ENCODE measurements at regions of chr1 and their contacts with region 1.

Region 1: DNA sequence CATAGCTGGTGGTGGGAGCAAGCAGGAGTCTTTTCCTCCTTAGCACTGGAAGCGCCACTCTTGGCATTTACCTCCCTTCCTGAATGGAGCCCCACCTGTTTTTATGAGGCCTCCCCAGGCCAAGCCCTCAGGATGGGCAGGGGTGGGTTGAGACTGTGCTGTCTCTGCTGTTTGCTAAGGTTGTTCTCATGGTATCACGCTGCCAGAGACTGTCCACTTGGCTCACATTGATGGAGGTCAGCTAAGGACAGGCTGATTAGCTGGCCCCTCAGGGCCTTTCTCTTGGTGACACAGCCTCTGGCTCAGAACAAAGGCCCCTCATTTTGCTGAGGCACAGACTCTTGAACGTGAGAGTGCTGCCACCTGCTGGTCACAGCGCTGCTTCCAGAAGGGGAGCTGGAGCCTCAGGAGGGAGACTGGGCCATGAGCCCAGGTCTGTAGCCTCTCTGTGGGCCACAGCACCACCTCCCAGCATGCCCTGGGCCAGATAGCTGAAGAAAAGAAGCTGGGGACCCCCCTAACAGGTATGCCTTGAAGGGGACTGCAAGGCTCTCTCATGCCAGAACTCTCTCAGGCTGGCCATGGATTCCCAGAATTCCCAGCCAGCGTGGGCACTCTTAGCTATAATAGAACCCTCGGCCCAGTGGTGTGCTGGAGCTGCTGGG is 85.6 kb downstream of the CD58 start:
- DNase-seq: peak; percentile 81 to 90
- H3K4me3 ChIP-seq: no peak overlapping the region
- H3K27ac ChIP-seq: peak overlapping the region; percentile 93
- H3K4me1 ChIP-seq: peaks cover 57% of the 10 kb centered on the region
- H3K27me3 ChIP-seq: no peaks in the 10 kb centered on the region
- CTCF ChIP-seq: peak; percentile 99

Region 2: GRCh38 chr1:116139592-116140134 is 345.5 kb before region 1 on chr1:
- CTCF ChIA-PET with region 1: interaction called, 13 read pairs
- POLR2A ChIA-PET with region 1: no interaction called
- intact Hi-C with region 1: loop called (anchors 1 kb)
- DNase-seq: no peak
- H3K4me3 ChIP-seq: no peak overlapping the region
- H3K27ac ChIP-seq: no peak overlapping the region
- H3K4me1 ChIP-seq: no peaks in the 10 kb centered on the region
- H3K27me3 ChIP-seq: no peaks in the 10 kb centered on the region
- CTCF ChIP-seq: no peak

Region 3: DNA sequence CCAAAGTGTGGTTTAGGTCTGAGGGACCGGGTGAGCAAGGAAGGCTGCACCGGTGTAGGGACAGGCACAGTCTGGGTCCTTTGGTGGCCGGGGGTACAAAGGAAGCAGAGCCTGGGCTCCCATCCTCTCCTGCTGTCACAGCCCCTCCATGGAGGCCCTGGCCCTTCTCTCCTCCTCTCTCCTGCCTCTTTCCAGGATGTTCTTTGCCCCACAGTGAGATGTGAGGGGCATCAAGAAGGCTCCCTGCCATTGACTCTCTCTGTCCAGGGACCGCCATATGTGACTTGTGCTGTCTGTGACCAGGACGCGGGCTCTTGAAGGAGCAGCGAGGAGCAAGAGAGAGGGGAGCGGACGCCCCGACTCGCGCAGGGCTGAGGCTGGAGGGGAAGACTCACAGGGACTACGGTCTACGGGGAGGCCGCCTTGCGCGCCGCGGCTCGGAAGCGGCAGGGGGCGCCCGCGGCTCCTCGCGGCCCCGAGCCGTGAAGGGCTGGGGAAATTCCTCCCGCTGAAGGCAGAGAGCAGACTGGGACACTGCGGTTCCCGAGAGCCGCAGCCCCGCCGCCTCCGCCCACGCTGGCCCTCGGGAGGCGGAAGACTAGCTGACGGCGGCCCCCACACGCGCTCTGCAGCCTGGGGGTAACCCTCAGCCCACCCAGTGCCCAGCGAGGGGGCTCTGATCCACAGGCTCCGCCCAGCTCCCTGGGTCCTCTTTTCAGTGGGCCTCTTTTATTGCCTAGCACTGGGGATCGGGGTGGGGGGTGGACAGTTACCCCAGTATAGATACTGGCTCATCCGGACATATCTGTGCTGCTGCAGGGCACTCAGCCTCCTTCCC is 333.2 kb before region 1 on chr1:
- CTCF ChIA-PET with region 1: interaction called, 3 read pairs
- POLR2A ChIA-PET with region 1: no interaction called
- intact Hi-C with region 1: loop called (anchors 1 kb)
- DNase-seq: peak; percentile 65 to 80
- H3K4me3 ChIP-seq: peak overlapping the region; percentile 60
- H3K27ac ChIP-seq: no peak overlapping the region
- H3K4me1 ChIP-seq: peaks cover 6% of the 10 kb centered on the region; the same call in 1 of the 2 replicates
- H3K27me3 ChIP-seq: no peaks in the 10 kb centered on the region
- CTCF ChIP-seq: peak; percentile 92

Region 4: GRCh38 chr1:116372587-116373444 is 112.4 kb before region 1 on chr1 and contains the start of gene ATP1A1:
- CTCF ChIA-PET with region 1: interaction called, 9 read pairs
- POLR2A ChIA-PET with region 1: interaction called, 3 read pairs
- intact Hi-C with region 1: loop called (anchors 1 kb)
- DNase-seq: peak; percentile 91 to 98
- H3K4me3 ChIP-seq: peak within 1 kb of the TSS; percentile 75
- H3K27ac ChIP-seq: peak within 1 kb of the TSS; percentile 90
- H3K4me1 ChIP-seq: peaks cover 42% of the 10 kb centered on the region
- H3K27me3 ChIP-seq: no peaks in the 10 kb centered on the region
- CTCF ChIP-seq: no peak; the same call in 1 of the 2 replicates
- total RNA-seq, gene ATP1A1: 393 and 399 TPM in 2 replicates

Region 5: GRCh38 chr1:116418091-116418830 is 66.9 kb before region 1 on chr1:
- CTCF ChIA-PET with region 1: interaction called, 11 read pairs
- POLR2A ChIA-PET with region 1: interaction called, 3 read pairs
- intact Hi-C with region 1: loop called (anchors 2 kb)
- DNase-seq: peak; percentile 69 to 82
- H3K4me3 ChIP-seq: peak overlapping the region; percentile 96
- H3K27ac ChIP-seq: peak overlapping the region; percentile 55
- H3K4me1 ChIP-seq: peaks cover 17% of the 10 kb centered on the region
- H3K27me3 ChIP-seq: no peaks in the 10 kb centered on the region
- CTCF ChIP-seq: no peak

Region 6: GRCh38 chr1:116498789-116499628 is 13.8 kb after region 1 on chr1:
- CTCF ChIA-PET with region 1: interaction called, 12 read pairs
- POLR2A ChIA-PET with region 1: no interaction called
- intact Hi-C with region 1: loop called (anchors 1 kb)
- DNase-seq: peak; percentile 58 to 67
- H3K4me3 ChIP-seq: no peak overlapping the region
- H3K27ac ChIP-seq: no peak overlapping the region
- H3K4me1 ChIP-seq: peaks cover 57% of the 10 kb centered on the region
- H3K27me3 ChIP-seq: no peaks in the 10 kb centered on the region
- CTCF ChIP-seq: peak; percentile 99

Measured in PC-9 (cell line).